A549 (cell line): ENCODE measurements at regions of chr3 and their contacts with region 1.

Region 1: DNA sequence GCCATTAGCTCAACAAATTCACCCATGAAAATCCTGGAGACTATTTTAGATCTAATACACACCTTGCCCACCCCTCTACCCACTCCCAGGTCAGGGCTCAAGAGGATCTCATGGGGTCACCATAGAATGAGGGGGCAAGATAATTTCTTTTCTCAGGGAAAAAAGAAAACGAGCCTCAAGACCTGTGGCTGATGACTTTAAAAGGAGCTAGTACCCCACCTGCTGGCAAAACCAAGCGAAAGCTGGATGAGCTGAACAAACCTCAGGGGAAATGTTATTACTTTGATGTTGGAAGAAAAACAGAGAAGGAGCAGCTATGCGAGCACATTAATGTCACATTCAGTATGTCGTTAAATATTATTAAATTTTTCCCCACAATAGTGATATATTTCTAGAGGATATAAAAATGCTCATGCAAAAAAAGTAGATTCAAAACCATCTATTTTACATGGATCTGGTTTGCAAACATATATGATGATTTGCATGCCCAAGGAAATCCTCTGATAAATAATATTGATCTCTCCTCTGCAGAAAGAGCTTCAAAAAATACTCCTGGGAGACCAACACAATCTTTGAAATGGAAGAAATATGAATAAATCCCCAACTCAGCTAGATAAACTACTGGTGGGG is 37.7 kb downstream of the PLD1 start:
- DNase-seq: peak; percentile 38 to 55
- ATAC-seq: peak; percentile 64 to 85; a peak in 5 of 6 replicates
- H3K4me3 ChIP-seq: no peak overlapping the region
- H3K27ac ChIP-seq: no peak overlapping the region
- H3K4me1 ChIP-seq: peaks cover 30% of the 10 kb centered on the region
- CTCF ChIP-seq: peak; percentile 74
- EP300 ChIP-seq: no peak
- POLR2A ChIP-seq: no peak
- RAD21 ChIP-seq: peak; percentile 75 to 76

Region 2: DNA sequence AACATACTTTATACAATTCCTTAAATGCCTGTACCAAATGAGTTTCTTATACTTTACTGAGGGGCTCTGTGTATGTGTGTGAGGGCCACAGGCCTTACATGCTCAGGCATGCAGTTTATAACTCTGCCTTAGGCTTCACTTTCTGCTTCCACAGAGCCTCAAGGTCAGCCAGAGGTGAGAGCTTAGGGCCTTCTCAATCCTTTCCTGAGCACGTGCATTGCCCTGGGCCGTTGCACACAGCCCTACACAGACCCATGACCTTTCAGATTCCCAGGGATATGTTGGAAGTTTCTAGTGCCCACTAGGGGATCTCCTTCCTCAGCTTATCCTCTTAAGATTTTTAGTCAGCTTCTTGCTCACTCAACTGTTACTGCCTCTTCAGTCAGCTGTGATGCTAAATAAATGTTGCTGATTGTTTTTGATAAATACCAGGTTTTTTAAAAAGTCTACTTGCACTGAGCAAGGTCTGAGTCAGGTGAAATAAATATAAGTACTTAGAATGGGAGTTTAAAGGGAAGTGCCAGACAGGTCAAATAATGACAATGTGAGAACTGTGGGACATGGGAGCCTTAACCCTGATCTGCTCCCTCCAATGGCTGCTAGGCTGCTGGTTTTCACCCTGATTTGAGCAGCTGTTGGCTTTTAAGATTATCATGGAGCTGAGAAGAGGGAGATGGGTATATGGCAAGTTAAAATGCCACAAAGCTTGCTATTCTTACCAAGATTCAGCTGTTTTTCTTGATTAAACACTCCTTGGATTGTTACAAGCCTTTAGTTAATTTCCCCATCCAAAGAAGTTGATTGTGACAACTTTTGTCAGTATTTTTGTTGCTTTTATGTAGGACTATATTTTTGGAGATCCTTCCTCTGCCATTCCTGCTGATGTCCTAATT is 131.8 kb before region 1 on chr3:
- CTCF ChIA-PET with region 1: interaction called, 21 read pairs
- POLR2A ChIA-PET with region 1: no interaction called
- DNase-seq: peak in 1 of 2 experiments; percentile 15
- ATAC-seq: peak in 1 of 2 experiments; percentile 75; a peak in 4 of 6 replicates
- H3K4me3 ChIP-seq: no peak overlapping the region
- H3K27ac ChIP-seq: 0 out of 6 replicates have a peak overlapping the region, but pooled peaks of 1 of the 2 experiments have one; percentile 10
- H3K4me1 ChIP-seq: no peaks in the 10 kb centered on the region
- CTCF ChIP-seq: no peak
- EP300 ChIP-seq: no peak
- POLR2A ChIP-seq: no peak
- RAD21 ChIP-seq: 0 out of 5 replicates have a peak, but pooled peaks of 1 of the 2 experiments have one; percentile 9

Region 3: GRCh38 chr3:171646357-171647133 is 126.0 kb before region 1 on chr3:
- CTCF ChIA-PET with region 1: interaction called, 21 read pairs
- POLR2A ChIA-PET with region 1: no interaction called
- DNase-seq: peak; percentile 30 to 45
- ATAC-seq: peak in 1 of 2 experiments; percentile 70; a peak in 2 of 6 replicates
- H3K4me3 ChIP-seq: no peak overlapping the region
- H3K27ac ChIP-seq: peak overlapping the region; percentile 16 to 49; a peak in 2 of 6 replicates
- H3K4me1 ChIP-seq: peaks cover 6% of the 10 kb centered on the region; the same call in 1 of the 3 replicates
- CTCF ChIP-seq: peak; percentile 56
- EP300 ChIP-seq: no peak
- POLR2A ChIP-seq: no peak
- RAD21 ChIP-seq: peak; percentile 69 to 73

Region 4: DNA sequence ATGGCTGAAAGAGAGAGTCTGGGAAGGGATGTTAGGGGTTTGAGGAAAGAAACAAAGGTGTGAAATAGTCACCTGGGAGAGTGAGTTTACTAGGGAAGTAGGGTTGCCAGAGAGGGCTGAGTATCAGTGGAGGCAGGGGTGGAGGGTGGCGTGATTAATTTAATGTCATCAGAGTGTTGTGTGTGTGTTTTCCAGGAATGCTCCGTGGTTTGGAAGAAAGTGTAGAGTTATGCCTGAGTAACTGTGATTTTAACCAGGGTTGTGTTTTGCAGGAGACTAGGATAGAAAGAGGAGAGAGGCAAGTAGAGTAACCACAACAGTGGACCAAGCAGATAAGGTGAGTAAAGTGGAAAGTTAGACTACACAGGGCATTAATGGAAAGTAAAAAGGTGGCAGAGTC is 10.5 kb after region 1 on chr3:
- CTCF ChIA-PET with region 1: interaction called, 10 read pairs
- POLR2A ChIA-PET with region 1: no interaction called
- DNase-seq: no peak
- ATAC-seq: peak in 1 of 2 experiments; percentile 35; a peak in 2 of 6 replicates
- H3K4me3 ChIP-seq: no peak overlapping the region
- H3K27ac ChIP-seq: no peak overlapping the region
- H3K4me1 ChIP-seq: peaks cover 13% of the 10 kb centered on the region
- CTCF ChIP-seq: no peak
- EP300 ChIP-seq: no peak
- POLR2A ChIP-seq: no peak
- RAD21 ChIP-seq: no peak

Region 5: DNA sequence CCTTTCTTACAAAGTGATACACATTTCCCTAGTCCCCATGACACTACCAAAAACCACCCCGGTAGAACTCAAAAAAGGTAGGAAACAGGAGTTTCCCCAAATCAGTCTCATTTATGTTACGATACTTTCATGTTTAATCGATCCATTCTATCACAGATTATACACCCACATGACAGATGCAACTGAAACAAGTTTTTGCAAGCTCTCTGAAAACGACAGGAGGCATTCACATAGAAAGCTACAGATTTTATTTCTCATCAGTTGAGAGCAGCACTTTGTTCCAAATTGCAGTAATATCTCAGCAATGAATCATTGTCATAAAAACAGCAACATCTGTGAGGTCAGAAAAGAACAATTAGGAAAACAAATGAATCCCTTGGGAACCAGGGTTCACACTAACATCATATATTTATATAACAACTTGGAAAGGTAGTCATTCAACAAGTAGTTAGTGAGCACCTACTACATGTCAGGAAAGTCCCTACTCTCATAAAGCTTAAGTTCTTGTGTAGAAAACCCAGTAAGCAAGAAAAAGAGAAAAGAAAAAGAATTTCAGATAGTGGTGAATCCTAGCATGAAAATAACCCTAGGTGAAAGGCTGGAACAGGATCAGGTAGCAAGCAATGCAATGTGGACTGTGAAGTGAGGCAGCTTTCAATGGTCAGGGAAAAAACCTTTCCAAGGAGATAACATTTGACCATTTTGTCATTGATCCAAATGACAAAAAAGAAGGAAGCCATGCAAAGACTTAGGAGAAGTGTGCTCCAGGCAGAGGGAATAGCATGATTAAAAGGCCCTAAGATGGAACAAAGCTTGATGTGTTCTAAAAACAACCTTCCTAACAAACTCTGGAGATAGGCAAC is 29.4 kb after region 1 on chr3:
- CTCF ChIA-PET with region 1: interaction called, 11 read pairs
- POLR2A ChIA-PET with region 1: no interaction called
- DNase-seq: peak in 1 of 2 experiments; percentile 59
- ATAC-seq: peak in 1 of 2 experiments; percentile 11; a peak in 2 of 6 replicates
- H3K4me3 ChIP-seq: no peak overlapping the region
- H3K27ac ChIP-seq: peak overlapping the region; percentile 0 to 73; a peak in 3 of 6 replicates
- H3K4me1 ChIP-seq: peaks cover 64% of the 10 kb centered on the region
- CTCF ChIP-seq: no peak
- EP300 ChIP-seq: no peak
- POLR2A ChIP-seq: no peak
- RAD21 ChIP-seq: no peak

Region 6: GRCh38 chr3:171829841-171830517 is 57.4 kb after region 1 on chr3:
- CTCF ChIA-PET with region 1: interaction called, 24 read pairs
- POLR2A ChIA-PET with region 1: no interaction called
- DNase-seq: peak; percentile 68 to 80
- ATAC-seq: peak; percentile 97
- H3K4me3 ChIP-seq: no peak overlapping the region
- H3K27ac ChIP-seq: peak overlapping the region; percentile 73 to 81
- H3K4me1 ChIP-seq: peaks cover 62% of the 10 kb centered on the region
- CTCF ChIP-seq: peak; percentile 63
- EP300 ChIP-seq: no peak
- POLR2A ChIP-seq: no peak
- RAD21 ChIP-seq: peak; percentile 84 to 85